Activated B cell treated with CpG ODN at 0.5 μM for 24 hours (primary cell): ENCODE measurements at regions of chr16 and their contacts with region 1.

Region 1: GRCh38 chr16:66740010-66740409 is 11.4 kb downstream of the DYNC1LI2 start:
- DNase-seq: no peak
- ATAC-seq: no peak
- H3K4me3 Mint-ChIP-seq: no peak overlapping the region
- H3K27ac Mint-ChIP-seq: no peak overlapping the region
- H3K4me1 Mint-ChIP-seq: peaks cover 4% of the 10 kb centered on the region
- H3K27me3 Mint-ChIP-seq: no peaks in the 10 kb centered on the region
- CTCF ChIP-seq: no peak

Region 2: DNA sequence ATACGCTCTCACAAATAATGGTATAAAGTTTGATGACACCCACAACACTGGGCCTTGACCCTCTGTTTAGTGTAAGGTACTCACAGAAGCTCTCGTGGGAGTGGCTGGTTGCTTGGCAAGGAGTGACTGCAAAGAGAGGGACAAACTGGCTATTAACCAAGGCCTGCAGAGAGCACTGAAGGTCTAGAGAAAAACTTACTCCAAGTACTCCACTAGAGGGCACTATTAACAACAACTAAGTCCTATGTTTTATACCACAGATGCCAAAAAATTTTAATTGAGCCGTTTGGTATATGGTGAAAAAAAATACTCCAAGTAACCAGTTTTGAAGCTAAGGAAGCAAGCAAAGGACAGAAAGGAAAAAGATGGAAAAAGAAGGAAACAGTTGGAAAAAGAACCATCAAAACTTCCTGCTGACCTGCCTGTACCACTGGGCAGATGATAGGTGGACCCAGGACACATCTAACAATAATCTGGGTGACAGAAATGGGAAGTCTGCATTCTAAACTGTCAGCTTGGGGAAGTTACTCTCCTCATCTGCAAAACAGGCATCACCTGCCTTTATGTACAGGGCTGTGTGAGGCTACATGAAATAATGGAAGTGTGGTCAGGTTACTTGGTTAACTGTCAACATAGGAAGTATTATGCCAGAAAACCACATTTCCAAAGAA is 11.8 kb before region 1 on chr16:
- CTCF ChIA-PET with region 1: interaction called, 15 read pairs
- POLR2A ChIA-PET with region 1: no interaction called
- intact Hi-C with region 1: no loop called
- DNase-seq: no peak
- ATAC-seq: peak; percentile 60
- H3K4me3 Mint-ChIP-seq: no peak overlapping the region
- H3K27ac Mint-ChIP-seq: no peak overlapping the region
- H3K4me1 Mint-ChIP-seq: peaks cover 2% of the 10 kb centered on the region
- H3K27me3 Mint-ChIP-seq: no peaks in the 10 kb centered on the region
- CTCF ChIP-seq: peak; percentile 71

Region 3: DNA sequence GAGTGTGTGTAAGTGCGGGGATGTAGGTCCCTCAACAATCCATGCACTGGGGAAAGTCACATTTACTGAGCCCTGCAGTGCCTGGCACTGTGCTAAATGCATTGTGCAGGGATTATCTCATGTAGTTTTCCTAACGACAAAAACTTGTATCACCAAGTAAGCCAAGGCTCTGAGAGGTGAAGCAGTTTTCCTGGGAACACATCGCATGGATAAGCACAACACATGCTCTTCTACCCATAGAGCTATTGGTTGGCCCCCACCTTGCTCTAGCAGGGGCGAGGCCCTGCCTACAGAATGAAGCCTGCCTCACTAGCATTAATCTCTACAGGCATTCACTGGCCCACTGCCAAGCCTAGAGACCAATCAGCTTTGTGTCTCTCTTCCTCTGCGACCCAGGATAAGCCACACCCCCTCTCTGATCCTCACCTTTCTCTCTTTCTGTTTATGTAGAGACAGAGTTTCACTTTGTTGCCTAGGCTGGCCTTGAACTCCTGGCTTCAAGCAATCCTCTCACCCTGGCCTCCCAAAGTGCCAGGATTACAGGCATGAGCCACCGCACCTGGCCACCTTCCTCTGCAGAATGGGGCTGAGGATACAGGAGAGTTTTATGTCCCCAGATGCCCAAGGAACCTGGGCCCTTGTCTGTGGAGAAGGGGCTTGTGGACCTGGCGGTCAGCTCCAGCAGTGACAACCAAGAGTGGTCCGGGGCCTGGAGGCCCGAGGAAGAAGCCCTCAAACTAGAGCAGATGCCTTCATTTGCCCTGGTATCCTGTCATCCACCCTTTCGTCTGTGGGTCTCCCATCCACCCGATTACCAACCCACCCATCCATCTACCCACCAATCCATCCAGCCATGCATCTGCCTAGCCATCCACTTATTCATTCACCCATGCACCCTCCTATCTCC is 165.9 kb after region 1 on chr16:
- CTCF ChIA-PET with region 1: no interaction called
- POLR2A ChIA-PET with region 1: no interaction called
- intact Hi-C with region 1: no loop called
- DNase-seq: no peak
- ATAC-seq: no peak
- H3K4me3 Mint-ChIP-seq: no peak overlapping the region
- H3K27ac Mint-ChIP-seq: no peak overlapping the region
- H3K4me1 Mint-ChIP-seq: no peaks in the 10 kb centered on the region
- H3K27me3 Mint-ChIP-seq: peaks cover 5% of the 10 kb centered on the region
- CTCF ChIP-seq: no peak